WTC11 (cell line): ENCODE measurements at regions of chr15 and their contacts with region 1.

Region 1: DNA sequence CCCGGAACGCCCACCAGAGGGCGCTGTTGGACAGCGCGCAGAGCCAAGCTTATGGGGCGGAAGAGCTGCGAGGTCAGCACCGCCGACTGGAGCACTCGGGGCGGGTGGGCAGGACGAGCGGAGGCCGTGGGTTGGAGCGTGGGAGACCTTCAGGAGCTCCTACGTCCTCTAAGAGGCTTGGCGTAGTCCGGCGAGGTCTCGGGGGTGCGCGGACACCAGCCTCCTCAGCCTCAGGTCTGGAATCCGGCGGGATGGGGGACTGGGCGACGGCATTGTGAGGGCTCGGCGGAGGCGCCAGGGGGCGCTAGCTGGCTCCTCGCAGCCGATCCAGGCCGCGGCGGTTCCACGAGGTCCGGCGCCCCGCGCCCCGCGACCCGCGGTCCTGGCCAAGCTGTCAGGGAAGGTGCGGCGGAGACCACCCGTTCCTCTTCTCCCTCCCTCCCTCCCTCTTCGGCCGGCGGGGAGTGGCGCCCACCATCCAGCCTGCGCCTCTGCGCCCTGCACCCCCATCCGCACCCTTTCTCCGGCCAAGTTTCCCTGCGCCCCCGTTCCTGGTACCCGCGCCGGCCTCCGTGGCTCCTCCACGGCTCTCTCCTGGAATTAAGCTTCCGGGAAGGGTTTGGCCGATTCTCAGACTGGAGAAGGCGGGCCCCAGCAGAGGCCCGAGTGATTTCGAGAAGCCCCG is 24.3 kb upstream of the POLG start:
- DNase-seq: peak; percentile 74
- ATAC-seq: peak; percentile 50
- H3K4me3 Mint-ChIP-seq: peak overlapping the region; percentile 64
- H3K27ac Mint-ChIP-seq: no peak overlapping the region
- H3K4me1 Mint-ChIP-seq: peaks cover 24% of the 10 kb centered on the region
- H3K27me3 Mint-ChIP-seq: peaks cover 96% of the 10 kb centered on the region
- CTCF ChIP-seq: peak; percentile 99

Region 2: DNA sequence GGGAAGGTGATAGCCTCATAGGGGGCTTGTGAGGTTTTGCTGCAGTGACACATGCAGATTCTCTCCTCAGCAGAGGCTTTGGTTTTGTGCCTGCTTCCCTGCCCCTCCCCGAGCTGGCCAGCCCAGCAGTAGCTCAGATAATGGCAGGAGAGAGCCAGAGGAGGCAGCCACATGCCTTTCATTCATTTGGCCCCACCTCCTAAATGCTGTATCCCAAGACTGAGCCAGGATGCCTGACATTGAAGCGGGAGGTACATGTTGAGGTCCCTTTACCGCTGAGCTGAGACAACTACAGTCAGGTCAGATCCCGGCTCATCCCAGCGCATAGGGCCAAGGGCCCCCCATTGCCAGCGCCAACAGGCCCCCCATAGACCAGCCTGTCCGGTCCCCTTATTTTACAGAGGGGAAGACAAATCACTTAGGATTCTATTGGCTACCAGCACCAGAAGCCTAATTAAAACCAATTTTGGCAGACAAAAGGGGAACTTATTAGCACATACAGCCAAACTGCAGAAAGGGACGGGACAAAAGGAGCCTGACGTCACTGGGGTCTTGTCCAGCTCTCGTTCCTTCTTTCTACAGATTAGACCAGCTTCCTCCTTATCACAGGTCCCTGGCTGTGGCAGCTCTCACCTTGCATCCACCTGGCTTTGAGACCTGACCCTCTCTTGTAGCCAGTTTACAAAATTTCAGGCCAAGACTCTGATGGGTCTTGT is 12.2 kb before region 1 on chr15:
- CTCF ChIA-PET with region 1: interaction called, 121 read pairs
- POLR2A ChIA-PET with region 1: interaction called, 6 read pairs
- DNase-seq: peak; percentile 43
- ATAC-seq: peak; percentile 98
- H3K4me3 Mint-ChIP-seq: no peak overlapping the region
- H3K27ac Mint-ChIP-seq: no peak overlapping the region
- H3K4me1 Mint-ChIP-seq: peaks cover 5% of the 10 kb centered on the region; the same call in 1 of the 2 replicates
- H3K27me3 Mint-ChIP-seq: peaks cover 6% of the 10 kb centered on the region; the same call in 1 of the 2 replicates
- CTCF ChIP-seq: no peak

Region 3: GRCh38 chr15:89416141-89416853 is 57.4 kb after region 1 on chr15:
- CTCF ChIA-PET with region 1: interaction called, 172 read pairs
- POLR2A ChIA-PET with region 1: no interaction called
- DNase-seq: peak; percentile 99
- ATAC-seq: peak; percentile 80
- H3K4me3 Mint-ChIP-seq: peak overlapping the region; percentile 43
- H3K27ac Mint-ChIP-seq: no peak overlapping the region
- H3K4me1 Mint-ChIP-seq: peaks cover 27% of the 10 kb centered on the region
- H3K27me3 Mint-ChIP-seq: peaks cover 99% of the 10 kb centered on the region
- CTCF ChIP-seq: peak; percentile 99

Region 4: DNA sequence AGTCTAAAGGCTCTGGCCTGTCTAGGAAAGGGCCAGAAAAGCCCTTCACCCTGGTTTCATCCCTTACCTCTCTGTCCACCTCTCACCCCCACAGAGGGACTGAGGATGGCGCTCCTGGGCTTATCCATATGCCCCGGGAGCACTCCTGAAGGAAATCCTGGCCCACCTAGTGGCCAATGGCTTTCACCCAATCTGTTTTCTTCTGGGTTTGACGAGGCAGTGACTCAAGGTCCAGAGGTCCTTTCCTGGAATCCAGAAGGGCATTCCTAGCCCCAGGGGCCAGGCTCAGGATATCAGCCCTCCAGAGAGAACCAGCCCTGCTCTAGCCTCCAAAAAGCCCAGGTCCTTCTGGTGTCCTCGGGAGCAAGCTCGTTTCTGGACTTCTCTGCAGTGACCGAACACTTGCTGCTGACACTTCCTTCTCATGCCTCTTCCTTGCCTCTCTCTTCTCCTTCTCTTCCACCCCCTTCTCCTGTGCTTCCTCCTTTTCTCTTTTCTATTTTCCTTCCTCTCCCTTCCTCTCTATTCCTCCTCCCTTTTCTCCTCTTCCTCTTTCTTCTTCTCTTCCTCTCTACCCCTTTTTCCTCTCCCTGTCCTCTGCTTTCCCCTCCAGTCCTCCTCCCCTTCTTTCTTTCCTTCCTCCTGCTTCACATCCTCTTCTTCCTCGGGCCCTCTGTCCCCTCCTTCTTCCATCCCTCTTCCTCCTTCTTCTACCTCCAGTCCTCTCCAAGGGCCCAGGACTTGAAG is 77.8 kb after region 1 on chr15:
- CTCF ChIA-PET with region 1: interaction called, 142 read pairs
- POLR2A ChIA-PET with region 1: no interaction called
- DNase-seq: no peak
- ATAC-seq: peak; percentile 59
- H3K4me3 Mint-ChIP-seq: no peak overlapping the region
- H3K27ac Mint-ChIP-seq: no peak overlapping the region; the same call in 1 of the 2 replicates
- H3K4me1 Mint-ChIP-seq: peaks cover 12% of the 10 kb centered on the region
- H3K27me3 Mint-ChIP-seq: peaks cover 24% of the 10 kb centered on the region
- CTCF ChIP-seq: no peak

Region 5: DNA sequence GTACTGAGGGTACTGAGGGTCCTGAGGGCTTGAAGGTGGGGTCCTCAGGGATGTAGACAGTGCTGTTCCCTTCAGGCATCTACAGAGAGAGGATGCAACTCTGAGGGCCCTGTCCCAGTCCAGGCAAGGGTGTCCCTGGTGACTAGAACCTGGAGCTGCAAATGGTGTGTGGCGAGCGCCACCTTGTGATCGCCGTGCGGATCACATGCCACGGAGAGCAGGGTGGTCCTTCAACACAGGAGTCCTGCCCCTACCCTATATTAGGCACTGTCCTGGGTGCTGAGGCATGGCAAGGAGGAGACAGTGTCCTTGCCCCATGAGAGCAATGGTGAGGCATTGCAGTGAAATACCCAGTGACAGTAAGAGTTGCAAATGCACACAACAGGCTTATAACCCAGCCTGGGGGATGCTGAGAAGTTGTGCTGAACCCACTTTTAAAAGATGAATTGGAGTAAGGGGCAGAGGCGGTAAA is 113.9 kb after region 1 on chr15:
- CTCF ChIA-PET with region 1: interaction called, 100 read pairs
- POLR2A ChIA-PET with region 1: interaction called, 5 read pairs
- DNase-seq: peak; percentile 95
- ATAC-seq: peak; percentile 92
- H3K4me3 Mint-ChIP-seq: no peak overlapping the region
- H3K27ac Mint-ChIP-seq: no peak overlapping the region
- H3K4me1 Mint-ChIP-seq: peaks cover 26% of the 10 kb centered on the region
- H3K27me3 Mint-ChIP-seq: peaks cover 30% of the 10 kb centered on the region
- CTCF ChIP-seq: peak; percentile 86

Region 6: DNA sequence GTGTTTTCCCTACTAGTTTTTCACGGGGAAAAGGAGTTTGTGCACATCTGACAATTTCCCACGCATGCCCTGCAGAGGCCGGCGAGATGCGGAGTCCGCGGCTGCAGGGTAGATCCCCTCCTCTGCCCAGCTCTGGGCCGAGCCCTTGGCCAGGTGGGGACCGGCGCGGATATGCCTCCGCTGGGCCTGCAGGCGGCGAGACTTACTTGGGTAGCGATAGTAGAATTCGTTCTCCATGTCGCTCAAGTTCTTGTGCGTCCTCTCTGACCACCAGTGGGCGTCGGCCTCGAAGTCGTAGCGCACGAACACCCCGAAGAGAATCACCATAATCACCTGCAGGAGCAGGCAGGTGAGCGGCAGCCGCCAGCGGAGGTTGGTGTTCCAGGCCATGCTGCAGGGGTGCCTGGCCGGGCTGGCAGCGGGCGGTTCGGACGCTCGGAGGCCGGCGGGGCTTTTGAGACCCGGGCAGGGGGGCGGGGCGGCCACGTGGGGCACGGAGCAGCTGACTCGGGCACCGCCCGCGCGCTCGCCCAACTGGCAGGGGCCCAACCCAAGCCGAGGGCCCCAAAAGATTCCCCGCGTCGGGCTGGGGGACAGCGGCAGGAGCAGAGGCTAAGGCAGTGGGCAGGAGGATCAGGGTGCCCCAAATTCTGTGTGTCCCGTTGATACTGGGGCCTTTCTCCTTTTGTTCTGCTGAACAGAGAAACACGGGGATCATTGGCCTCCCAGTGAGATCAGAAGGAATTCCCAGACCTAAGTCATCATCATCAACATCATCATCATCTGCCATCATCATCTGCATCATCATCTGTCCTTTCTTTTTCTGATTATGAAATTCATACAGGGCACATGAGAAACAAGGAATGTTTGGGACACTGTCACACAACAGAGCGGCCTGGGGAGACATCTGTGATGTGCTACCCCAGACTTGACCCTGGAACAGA is 137.5 kb after region 1 on chr15 and contains the start of gene RHCG:
- CTCF ChIA-PET with region 1: interaction called, 54 read pairs
- POLR2A ChIA-PET with region 1: no interaction called
- DNase-seq: peak; percentile 84
- ATAC-seq: peak; percentile 91
- H3K4me3 Mint-ChIP-seq: peak within 1 kb of the TSS; percentile 67
- H3K27ac Mint-ChIP-seq: no peak within 1 kb of the TSS
- H3K4me1 Mint-ChIP-seq: 0 out of 2 replicates have a peak, but pooled peaks cover 3% of the 10 kb centered on the region
- H3K27me3 Mint-ChIP-seq: peaks cover 38% of the 10 kb centered on the region
- CTCF ChIP-seq: no peak
- total RNA-seq, gene RHCG: 0.23 to 0.37 TPM (median 0.31 TPM) in 3 replicates